Adrenal gland (tissue), 19 donors: ENCODE measurements at regions of chr20 and their contacts with region 1.

Region 1: DNA sequence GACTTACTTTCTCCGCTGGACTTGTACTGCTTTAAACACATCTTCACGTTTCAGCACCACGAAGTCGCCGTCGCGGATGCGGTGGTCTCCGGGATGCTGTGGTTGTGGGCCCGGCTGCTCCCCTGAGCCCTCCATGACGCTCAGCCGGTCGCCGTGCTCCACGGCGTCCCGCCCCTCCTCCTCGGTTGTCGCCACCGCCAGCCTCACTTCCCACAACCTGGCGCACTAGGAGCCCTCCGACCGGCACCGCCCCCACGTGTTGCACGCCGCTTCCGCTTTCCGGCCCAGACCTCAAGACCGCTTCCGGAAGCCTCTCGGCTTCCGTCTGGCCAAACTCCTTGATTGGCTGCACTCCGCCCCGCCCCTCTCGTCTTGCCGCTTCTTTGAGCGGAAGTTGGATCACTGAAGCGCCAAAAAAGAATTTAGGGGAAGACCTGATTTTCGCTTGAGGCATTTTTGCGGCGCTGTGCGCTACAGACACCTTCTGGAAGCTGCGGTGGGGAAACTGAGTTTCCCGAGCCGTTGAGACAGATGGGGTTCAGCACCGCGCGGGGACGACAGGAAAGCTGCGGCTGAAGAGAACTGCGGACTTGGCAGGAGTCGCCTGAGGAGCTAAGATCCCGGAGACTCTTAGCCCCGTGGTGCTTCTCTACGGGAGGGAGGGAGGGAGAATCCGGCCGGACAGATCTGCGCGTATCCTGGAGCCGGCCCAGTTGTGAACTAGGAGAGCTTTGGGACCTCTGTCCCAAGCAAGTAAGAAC is at the starts of genes MCM8 and TRMT6:
- DNase-seq: peak; percentile 94 to 99 (median 97)
- H3K4me3 ChIP-seq: peak within 1 kb of the TSS; percentile 34 to 90 (median 74)
- H3K27ac ChIP-seq: peak within 1 kb of the TSS; percentile 62 to 82 (median 76)
- H3K4me1 ChIP-seq: peaks cover 7 to 23% of the 10 kb centered on the region in 2 donors
- H3K27me3 ChIP-seq: no peaks in the 10 kb centered on the region
- CTCF ChIP-seq: no peak
- POLR2A ChIP-seq: peak in 1 of 2 donors; percentile 73
- total RNA-seq, gene MCM8: 1.8 to 12.6 (median 6.2) TPM
- total RNA-seq, gene TRMT6: 8.9 to 18.8 (median 15.3) TPM

Region 2: DNA sequence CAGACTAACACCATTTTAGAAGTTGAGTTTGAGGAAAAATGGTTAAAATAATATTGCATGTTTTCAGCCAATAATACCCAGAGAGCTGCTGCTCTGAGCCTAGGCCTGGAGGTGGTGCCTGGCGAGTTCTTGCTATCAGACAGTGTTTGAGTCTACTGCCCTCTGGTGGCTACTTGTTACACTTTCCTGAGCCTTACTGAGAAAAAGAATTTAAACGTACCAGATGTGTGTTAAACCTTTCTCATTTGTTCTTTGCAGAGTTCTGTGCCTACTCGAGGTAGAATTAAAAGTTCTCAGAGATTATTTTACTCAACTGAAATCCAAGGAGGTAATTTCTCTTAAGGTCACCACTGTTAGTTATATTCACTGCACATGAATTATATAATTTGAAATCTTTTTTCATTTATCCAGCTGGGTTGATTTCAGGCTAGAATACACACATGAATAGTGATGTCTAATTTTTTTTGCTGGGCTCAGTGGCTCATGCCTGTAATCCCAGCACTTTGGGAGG is 162.0 kb before region 1 on chr20:
- intact Hi-C with region 1: no loop called
- DNase-seq: peak; percentile 84 to 95 (median 86)
- H3K4me3 ChIP-seq: no peak overlapping the region
- H3K27ac ChIP-seq: no peak overlapping the region
- H3K4me1 ChIP-seq: peaks cover 21 to 22% of the 10 kb centered on the region in 2 donors
- H3K27me3 ChIP-seq: no peaks in the 10 kb centered on the region
- CTCF ChIP-seq: peak; percentile 90 to 96 (median 94)
- POLR2A ChIP-seq: no peak

Region 3: DNA sequence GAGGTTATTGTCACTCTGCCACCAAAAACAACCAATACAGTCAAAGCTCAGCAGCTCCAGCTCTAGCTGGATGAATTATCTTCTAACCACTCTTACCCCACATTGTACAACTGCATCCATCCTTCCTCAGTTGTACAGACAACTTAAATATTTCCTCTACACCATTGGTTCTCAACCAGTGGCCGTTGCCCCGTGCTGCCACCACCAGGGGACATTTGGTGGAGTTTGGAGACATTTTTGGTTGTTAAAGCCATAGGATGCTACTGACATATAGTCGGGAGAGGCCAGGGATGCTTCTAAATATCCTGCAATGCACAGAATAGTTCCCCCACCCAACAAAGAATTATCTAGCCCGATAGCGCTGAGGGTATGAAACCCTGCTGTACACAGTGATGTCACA is 141.0 kb before region 1 on chr20:
- intact Hi-C with region 1: no loop called
- DNase-seq: no peak
- H3K4me3 ChIP-seq: no peak overlapping the region
- H3K27ac ChIP-seq: no peak overlapping the region
- H3K4me1 ChIP-seq: peaks cover 2 to 6% of the 10 kb centered on the region in 2 donors
- H3K27me3 ChIP-seq: no peaks in the 10 kb centered on the region
- CTCF ChIP-seq: no peak
- POLR2A ChIP-seq: no peak

Region 4: DNA sequence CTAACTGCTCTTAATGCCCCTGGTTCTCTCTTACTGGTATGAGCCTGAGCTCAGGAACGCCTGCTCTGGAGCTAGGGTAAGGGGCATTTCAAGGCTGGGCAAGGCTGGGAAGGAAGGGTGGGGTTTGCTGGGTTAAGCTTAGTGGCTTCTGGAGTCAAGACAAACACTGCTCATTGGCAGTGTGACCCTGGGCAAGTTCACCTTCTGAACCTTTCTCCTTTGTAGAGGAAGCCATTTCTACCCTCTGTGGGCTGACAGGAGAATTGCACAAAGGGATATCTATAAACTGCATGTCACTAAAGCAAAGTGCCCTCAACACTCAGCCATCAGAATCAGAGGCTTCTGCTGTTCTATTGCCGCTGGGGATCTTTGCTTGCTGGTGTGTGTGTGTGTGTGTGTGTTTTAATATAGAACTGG is 123.7 kb after region 1 on chr20:
- intact Hi-C with region 1: loop called in 1 of 2 experiments (anchors 10 kb)
- DNase-seq: peak in 3 of 7 donors; percentile 23 to 61 (median 33)
- H3K4me3 ChIP-seq: no peak overlapping the region
- H3K27ac ChIP-seq: peak overlapping the region in 4 of 5 donors; percentile 41 to 87 (median 54)
- H3K4me1 ChIP-seq: peaks cover 20 to 28% of the 10 kb centered on the region in 2 donors
- H3K27me3 ChIP-seq: no peaks in the 10 kb centered on the region
- CTCF ChIP-seq: peak in 4 of 6 experiments; percentile 20 to 53 (median 32)
- POLR2A ChIP-seq: no peak